ENCODE measurements at regions of chr20 and their contacts with region 1.

Region 1: DNA sequence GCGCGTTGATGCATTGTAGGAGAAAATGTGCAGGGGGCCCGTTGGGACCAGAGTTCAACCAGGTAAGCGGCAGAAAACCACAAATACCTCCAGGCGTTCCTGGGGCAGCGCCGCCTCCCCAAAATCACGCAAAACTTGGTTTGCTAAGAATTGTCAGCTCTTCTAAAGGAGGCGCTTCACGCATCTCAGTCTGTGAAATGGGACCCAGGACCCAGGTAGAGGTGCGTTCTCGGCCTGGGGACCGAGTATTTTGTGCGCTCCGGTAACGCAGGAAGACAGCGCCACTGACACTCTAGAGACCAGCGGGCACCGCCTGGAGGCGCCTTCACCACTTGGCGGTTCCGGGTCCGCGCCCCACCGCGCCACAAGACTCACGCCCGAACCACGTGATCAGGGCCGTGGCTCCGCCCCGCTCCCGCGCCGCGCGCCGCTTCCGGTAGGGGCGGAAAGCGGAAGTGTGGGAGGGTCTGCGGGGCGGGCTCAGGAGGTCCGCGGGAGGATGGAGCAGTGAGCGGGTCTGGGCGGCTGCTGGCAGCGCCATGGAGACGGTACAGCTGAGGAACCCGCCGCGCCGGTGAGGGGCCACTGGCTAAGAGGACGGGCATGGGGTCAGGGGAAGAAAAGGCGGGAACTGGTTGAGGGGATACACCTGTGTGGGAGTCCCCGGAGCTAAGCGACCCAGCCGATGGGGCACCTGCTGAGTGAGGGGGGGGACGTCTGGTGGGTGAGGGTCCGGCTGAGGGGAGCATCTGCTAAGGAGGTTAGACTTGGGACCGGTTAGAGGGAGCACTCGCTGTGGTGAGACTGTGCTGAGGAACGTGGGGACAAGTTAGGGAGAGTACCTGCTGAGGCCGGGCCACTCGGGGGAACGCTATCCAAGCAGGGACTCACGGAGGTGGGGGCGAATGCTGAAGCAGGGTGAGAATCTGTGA is at the start of gene STK4:
- DNase-seq: peak; percentile 99
- H3K4me3 Mint-ChIP-seq: peak within 1 kb of the TSS; percentile 91
- H3K27ac Mint-ChIP-seq: peak within 1 kb of the TSS; percentile 98
- H3K4me1 Mint-ChIP-seq: peaks cover 65% of the 10 kb centered on the region
- H3K27me3 Mint-ChIP-seq: no peaks in the 10 kb centered on the region
- total RNA-seq, gene STK4: 141 and 143 TPM in 2 replicates

Region 2: DNA sequence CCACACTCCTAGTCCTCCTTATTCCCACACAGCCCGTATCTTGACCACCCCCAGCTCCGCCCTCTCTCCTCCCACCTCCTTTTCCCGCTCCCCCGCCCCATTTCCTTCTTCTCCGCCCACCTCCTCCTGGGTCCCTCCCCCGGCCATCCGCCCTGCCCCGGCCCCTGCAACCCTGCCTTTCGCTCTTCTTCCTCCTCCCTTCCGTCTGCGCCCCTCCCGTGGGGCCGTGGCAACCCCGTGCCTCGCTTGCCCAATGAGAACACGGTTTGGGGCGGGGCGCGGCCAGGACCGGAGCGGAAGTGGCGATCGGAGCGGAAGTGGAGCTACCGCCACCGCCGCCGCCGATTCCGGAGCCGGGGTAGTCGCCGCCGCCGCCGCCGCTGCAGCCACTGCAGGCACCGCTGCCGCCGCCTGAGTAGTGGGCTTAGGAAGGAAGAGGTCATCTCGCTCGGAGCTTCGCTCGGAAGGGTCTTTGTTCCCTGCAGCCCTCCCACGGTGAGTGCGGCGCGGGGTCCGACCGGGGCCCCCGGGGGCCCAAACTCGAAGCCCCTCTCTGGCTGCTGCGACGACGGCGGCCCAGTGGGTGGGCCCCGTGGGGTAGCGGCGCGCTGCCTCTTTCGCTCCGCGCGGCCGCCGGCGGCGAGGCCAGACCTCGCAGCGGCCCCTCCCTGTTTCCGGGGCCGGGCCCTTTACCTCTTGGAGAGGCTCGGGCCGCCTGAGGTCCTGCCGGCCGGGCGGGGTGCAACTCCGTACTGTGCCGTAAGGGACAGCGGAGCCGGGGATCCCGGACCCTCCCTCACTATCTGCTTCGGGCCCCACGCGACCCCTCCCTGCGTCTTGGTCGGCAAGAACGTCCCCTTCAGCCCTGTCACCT is 80.7 kb before region 1 on chr20 and contains the start of gene YWHAB:
- intact Hi-C with region 1: loop called (anchors 5 kb)
- DNase-seq: peak; percentile 99
- H3K4me3 Mint-ChIP-seq: peak within 1 kb of the TSS; percentile 97
- H3K27ac Mint-ChIP-seq: peak within 1 kb of the TSS; percentile 94
- H3K4me1 Mint-ChIP-seq: peaks cover 48% of the 10 kb centered on the region
- H3K27me3 Mint-ChIP-seq: no peaks in the 10 kb centered on the region
- total RNA-seq, gene YWHAB: 241 and 243 TPM in 2 replicates

Region 3: GRCh38 chr20:44946271-44946852 is 19.9 kb before region 1 on chr20:
- intact Hi-C with region 1: no loop called
- DNase-seq: no peak
- H3K4me3 Mint-ChIP-seq: no peak overlapping the region
- H3K27ac Mint-ChIP-seq: peak overlapping the region; percentile 13
- H3K4me1 Mint-ChIP-seq: no peaks in the 10 kb centered on the region
- H3K27me3 Mint-ChIP-seq: no peaks in the 10 kb centered on the region

Region 4: DNA sequence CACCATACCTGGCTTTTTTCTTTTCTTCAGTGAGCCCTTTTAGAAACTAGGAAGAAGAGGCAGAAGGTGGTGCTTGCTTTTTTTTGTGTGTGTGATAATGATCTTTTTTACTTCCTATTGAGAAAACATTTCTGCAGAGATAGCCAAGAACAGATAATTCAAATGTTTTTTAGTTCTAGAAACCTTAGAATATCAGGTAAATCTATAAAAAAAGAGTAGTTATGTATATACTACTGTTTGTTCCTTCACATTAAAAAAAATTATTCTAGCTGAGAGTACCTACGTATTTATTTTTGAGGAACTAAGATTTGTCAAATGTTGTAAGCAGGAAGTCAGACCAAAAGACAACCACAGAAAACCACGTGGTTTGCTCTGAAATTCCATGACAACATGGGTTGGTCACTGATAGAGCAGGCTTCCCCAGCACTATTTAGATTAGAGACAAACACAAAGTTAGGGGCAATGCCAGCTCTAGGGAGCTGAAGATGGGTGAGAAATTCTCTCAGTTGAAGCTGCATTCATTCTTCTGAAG is 12.9 kb after region 1 on chr20:
- intact Hi-C with region 1: loop called (anchors 1 kb)
- DNase-seq: peak; percentile 93
- H3K4me3 Mint-ChIP-seq: peak overlapping the region; percentile 78
- H3K27ac Mint-ChIP-seq: peak overlapping the region; percentile 96
- H3K4me1 Mint-ChIP-seq: peaks cover 74% of the 10 kb centered on the region
- H3K27me3 Mint-ChIP-seq: no peaks in the 10 kb centered on the region

Region 5: DNA sequence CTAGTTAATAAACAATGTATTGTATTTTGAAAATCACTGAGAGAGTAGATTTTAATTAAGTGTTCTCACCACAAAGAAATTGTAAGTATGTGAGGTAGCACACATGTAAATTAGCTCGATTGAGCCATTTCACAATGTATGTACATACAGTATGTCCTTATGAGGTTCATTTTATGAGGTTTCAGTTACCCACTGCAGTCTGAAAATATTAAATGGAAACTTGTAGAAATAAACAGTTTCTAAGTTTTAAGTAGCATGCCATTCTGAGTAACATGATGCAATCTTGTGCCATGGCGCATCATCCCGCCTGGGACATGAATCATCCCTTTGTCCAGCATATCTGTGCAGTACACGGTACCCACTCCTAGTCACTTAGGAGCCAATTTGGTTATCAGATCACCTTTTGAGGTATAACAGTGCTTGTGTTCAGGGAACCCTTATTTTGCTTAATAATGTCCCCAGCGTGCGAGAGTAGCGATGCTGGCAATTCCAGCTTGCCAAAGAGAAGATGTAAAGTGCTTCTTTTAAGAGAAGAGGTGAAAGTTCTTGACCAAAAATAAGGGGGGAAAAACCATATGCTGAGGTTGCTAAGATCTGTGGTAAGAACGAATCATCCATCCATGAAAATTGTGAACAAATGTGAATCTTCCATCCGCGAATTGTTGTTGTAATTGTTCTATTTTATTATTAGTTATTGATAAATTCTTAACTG is 69.9 kb after region 1 on chr20:
- intact Hi-C with region 1: loop called (anchors 5 kb)
- DNase-seq: no peak
- H3K4me3 Mint-ChIP-seq: no peak overlapping the region
- H3K27ac Mint-ChIP-seq: peak overlapping the region; percentile 80
- H3K4me1 Mint-ChIP-seq: peaks cover 42% of the 10 kb centered on the region
- H3K27me3 Mint-ChIP-seq: no peaks in the 10 kb centered on the region

Measured in activated CD4-positive, alpha-beta T cell treated with anti-CD3 and anti-CD28 coated beads, Interleukin-2, amount 10 ng/mL, durations not matched to agents 24 days and 14 days (primary cell).